ENCODE measurements at regions of chr1 and their contacts with region 1.

Region 1: GRCh38 chr1:85259118-85259911 is at the start of gene C1orf52:
- DNase-seq: peak; percentile 88
- H3K4me3 Mint-ChIP-seq: peak within 1 kb of the TSS; percentile 88
- H3K27ac Mint-ChIP-seq: peak within 1 kb of the TSS; percentile 97
- H3K4me1 Mint-ChIP-seq: peaks cover 31% of the 10 kb centered on the region
- H3K27me3 Mint-ChIP-seq: no peaks in the 10 kb centered on the region
- CTCF ChIP-seq: peak; percentile 85
- total RNA-seq, gene C1orf52: 29.6 and 31.7 TPM in 2 replicates

Region 2: GRCh38 chr1:84944767-84945486 is 314.4 kb before region 1 on chr1:
- CTCF ChIA-PET with region 1: interaction called, 111 read pairs
- POLR2A ChIA-PET with region 1: interaction called, 20 read pairs
- intact Hi-C with region 1: loop called (anchors 1 kb)
- DNase-seq: peak; percentile 95
- H3K4me3 Mint-ChIP-seq: peak overlapping the region; percentile 67
- H3K27ac Mint-ChIP-seq: peak overlapping the region; percentile 69
- H3K4me1 Mint-ChIP-seq: peaks cover 7% of the 10 kb centered on the region
- H3K27me3 Mint-ChIP-seq: peaks cover 14% of the 10 kb centered on the region
- CTCF ChIP-seq: peak; percentile 74

Region 3: DNA sequence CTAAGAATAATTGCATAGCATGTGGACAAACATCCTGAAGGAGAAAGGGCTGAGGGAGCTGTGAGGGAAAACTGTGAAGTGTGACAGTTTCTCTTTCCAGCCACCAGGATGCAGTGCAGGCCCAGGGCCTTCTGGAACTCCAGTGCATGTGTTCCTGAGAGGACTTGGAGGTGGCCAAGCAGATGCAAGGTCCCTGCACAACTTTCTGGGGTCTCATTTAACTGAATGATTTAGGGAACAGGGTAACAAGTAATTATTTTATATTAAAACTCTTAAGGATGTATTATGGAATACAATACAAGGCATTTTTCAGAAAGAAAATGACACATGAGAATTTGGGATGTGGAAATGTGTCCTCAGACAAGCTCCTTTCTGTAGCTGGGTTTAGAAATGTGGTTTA is 149.8 kb before region 1 on chr1:
- CTCF ChIA-PET with region 1: interaction called, 113 read pairs
- POLR2A ChIA-PET with region 1: interaction called, 20 read pairs
- intact Hi-C with region 1: loop called (anchors 1 kb)
- DNase-seq: peak; percentile 65
- H3K4me3 Mint-ChIP-seq: no peak overlapping the region
- H3K27ac Mint-ChIP-seq: no peak overlapping the region
- H3K4me1 Mint-ChIP-seq: no peaks in the 10 kb centered on the region
- H3K27me3 Mint-ChIP-seq: no peaks in the 10 kb centered on the region
- CTCF ChIP-seq: peak; percentile 93

Region 4: DNA sequence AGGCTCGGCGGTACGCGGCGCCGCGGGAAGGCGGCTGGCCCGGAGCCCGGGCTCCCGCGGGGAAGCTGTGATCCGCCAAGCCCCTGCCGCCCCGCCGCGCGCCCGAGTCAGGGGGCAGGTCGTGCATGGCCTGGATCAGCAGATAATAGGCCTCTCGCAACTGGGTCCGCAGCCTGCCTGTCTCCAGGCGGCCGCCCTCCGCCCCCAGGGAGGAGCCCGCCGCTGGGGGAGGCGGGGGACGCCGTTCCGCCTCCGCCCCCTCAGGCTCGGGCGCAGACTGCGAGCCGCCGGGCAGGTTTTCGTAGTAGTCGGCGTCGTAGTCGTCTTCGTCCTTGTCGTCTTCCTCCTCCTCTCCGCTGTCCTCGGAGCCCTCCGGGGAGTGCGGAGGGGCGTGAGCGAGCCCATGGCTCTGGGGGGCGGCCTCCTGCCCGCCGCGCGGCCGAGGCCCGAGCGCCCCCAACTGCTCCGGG is 58.4 kb before region 1 on chr1 and contains the start of gene SYDE2:
- CTCF ChIA-PET with region 1: interaction called, 8 read pairs
- POLR2A ChIA-PET with region 1: interaction called, 42 read pairs
- intact Hi-C with region 1: loop called (anchors 2 kb)
- DNase-seq: peak; percentile 79
- H3K4me3 Mint-ChIP-seq: peak within 1 kb of the TSS; percentile 93
- H3K27ac Mint-ChIP-seq: peak within 1 kb of the TSS; percentile 76
- H3K4me1 Mint-ChIP-seq: peaks cover 14% of the 10 kb centered on the region
- H3K27me3 Mint-ChIP-seq: no peaks in the 10 kb centered on the region
- CTCF ChIP-seq: no peak
- total RNA-seq, gene SYDE2: 4.3 and 5.9 TPM in 2 replicates

Region 5: GRCh38 chr1:85276215-85276977 is 17.1 kb after region 1 on chr1 and contains the start of gene BCL10:
- CTCF ChIA-PET with region 1: interaction called, 42 read pairs
- POLR2A ChIA-PET with region 1: interaction called, 131 read pairs
- intact Hi-C with region 1: loop called (anchors 1 kb)
- DNase-seq: peak; percentile 98
- H3K4me3 Mint-ChIP-seq: peak within 1 kb of the TSS; percentile 77
- H3K27ac Mint-ChIP-seq: peak within 1 kb of the TSS; percentile 85
- H3K4me1 Mint-ChIP-seq: peaks cover 40% of the 10 kb centered on the region
- H3K27me3 Mint-ChIP-seq: no peaks in the 10 kb centered on the region
- CTCF ChIP-seq: no peak
- total RNA-seq, gene BCL10: 43.9 and 55.8 TPM in 2 replicates

Region 6: GRCh38 chr1:85398391-85399064 is 139.2 kb after region 1 on chr1:
- CTCF ChIA-PET with region 1: interaction called, 15 read pairs
- POLR2A ChIA-PET with region 1: interaction called, 3 read pairs
- intact Hi-C with region 1: loop called (anchors 1 kb)
- DNase-seq: peak; percentile 66
- H3K4me3 Mint-ChIP-seq: no peak overlapping the region
- H3K27ac Mint-ChIP-seq: no peak overlapping the region
- H3K4me1 Mint-ChIP-seq: peaks cover 7% of the 10 kb centered on the region
- H3K27me3 Mint-ChIP-seq: no peaks in the 10 kb centered on the region
- CTCF ChIP-seq: peak; percentile 44